ENCODE measurements at regions of chr2 and their contacts with region 1.

Region 1: GRCh38 chr2:219245148-219245898 is at the starts of genes GLB1L and STK16:
- DNase-seq: peak; percentile 92
- H3K4me3 Mint-ChIP-seq: peak within 1 kb of the TSS; percentile 100
- H3K27ac Mint-ChIP-seq: peak within 1 kb of the TSS; percentile 81
- H3K4me1 Mint-ChIP-seq: peaks cover 66% of the 10 kb centered on the region
- H3K27me3 Mint-ChIP-seq: no peaks in the 10 kb centered on the region
- total RNA-seq, gene GLB1L: 6.2 to 7.3 TPM
- total RNA-seq, gene STK16: 41.6 to 42.3 TPM

Region 2: GRCh38 chr2:219045937-219046550 is 199.3 kb before region 1 on chr2:
- CTCF ChIA-PET with region 1: no interaction called
- POLR2A ChIA-PET with region 1: no interaction called
- DNase-seq: peak; percentile 39
- H3K4me3 Mint-ChIP-seq: no peak overlapping the region
- H3K27ac Mint-ChIP-seq: no peak overlapping the region
- H3K4me1 Mint-ChIP-seq: peaks cover 3% of the 10 kb centered on the region
- H3K27me3 Mint-ChIP-seq: peaks cover 45% of the 10 kb centered on the region

Region 3: DNA sequence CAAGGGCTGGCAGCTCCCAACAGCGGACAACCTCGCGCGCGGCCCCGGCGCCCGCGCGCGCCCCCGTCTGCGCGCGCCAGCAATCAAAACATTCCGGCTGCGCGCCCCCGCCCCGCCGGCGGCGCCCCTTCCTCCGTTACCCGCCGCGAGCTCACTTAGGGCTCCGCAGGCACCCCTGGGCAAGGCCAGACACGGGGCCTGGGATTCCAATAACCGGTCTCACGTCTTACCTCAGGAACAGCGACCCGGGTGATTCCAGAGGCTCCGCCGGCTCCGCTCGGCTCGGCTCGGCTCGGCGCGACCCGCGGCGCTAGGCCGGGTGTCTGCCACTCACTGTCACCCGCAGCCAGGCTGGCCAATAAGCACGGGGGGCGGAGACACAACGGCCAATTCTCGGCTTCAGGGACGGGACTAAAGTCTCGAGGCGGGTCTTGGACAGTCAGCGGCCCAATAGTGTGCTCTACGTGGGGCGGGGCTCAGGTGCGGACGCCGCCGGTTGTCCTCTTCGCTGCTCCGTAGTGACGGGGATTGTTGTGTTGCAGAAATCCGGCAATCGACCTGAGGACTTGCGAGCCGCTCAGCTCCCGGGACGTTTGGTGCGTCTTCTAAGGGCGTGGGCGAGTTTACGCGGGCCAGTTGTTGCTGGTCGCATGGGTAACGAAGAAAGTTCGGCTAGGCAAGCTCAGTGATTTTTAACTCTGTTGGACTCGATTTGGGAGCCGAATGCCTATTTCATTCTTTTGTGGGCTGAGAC is 15.8 kb before region 1 on chr2 and contains the starts of genes ANKZF1 and ATG9A:
- CTCF ChIA-PET with region 1: interaction called, 17 read pairs
- POLR2A ChIA-PET with region 1: interaction called, 425 read pairs
- DNase-seq: peak; percentile 99
- H3K4me3 Mint-ChIP-seq: peak within 1 kb of the TSS; percentile 99
- H3K27ac Mint-ChIP-seq: peak within 1 kb of the TSS; percentile 100
- H3K4me1 Mint-ChIP-seq: peaks cover 56% of the 10 kb centered on the region
- H3K27me3 Mint-ChIP-seq: no peaks in the 10 kb centered on the region
- total RNA-seq, gene ANKZF1: 121 to 122 TPM
- total RNA-seq, gene ATG9A: 58.9 to 60.7 TPM

Region 4: GRCh38 chr2:219269362-219270054 is 24.2 kb after region 1 on chr2:
- CTCF ChIA-PET with region 1: no interaction called
- POLR2A ChIA-PET with region 1: no interaction called
- DNase-seq: no peak
- H3K4me3 Mint-ChIP-seq: no peak overlapping the region
- H3K27ac Mint-ChIP-seq: no peak overlapping the region
- H3K4me1 Mint-ChIP-seq: no peaks in the 10 kb centered on the region
- H3K27me3 Mint-ChIP-seq: peaks cover 12% of the 10 kb centered on the region

Region 5: DNA sequence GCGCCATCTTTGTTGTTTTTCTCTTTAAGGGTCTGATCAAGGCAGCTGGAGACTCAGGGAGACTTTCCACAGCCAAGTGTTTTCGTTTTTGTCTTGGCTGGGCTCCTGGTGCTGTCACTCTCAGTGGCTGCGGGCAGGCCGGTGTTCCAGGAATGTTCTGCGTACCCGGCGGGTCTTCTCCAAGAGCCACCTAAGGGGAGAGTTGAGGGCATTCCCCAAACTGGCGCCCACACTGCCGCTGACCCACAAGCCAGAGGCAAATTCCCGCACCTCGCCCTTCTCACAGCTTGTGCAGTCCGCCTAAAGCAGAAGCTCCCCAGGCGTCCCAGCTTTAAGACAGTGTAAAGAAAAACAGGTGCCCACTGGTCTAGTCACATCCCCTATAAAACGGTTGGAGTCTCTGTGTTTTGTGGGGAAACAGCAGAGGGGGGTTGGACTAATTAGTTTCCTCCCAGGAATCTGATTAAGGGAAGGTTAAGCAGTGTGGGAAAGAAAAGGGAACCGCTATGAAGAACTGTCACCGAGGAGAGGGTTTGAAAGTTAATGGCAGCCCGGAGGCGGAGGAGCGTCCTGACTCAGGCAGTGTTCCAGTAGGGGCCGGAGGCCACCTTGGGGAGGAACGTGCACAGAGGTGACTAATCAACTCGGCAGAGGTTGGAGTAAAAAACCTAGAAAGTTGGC is 606.6 kb after region 1 on chr2:
- CTCF ChIA-PET with region 1: no interaction called
- POLR2A ChIA-PET with region 1: no interaction called
- DNase-seq: no peak
- H3K4me3 Mint-ChIP-seq: no peak overlapping the region
- H3K27ac Mint-ChIP-seq: no peak overlapping the region
- H3K4me1 Mint-ChIP-seq: no peaks in the 10 kb centered on the region
- H3K27me3 Mint-ChIP-seq: no peaks in the 10 kb centered on the region